Panc1 (cell line): ENCODE measurements at regions of chr10 and their contacts with region 1.

Region 1: GRCh38 chr10:93458821-93459257 is 23.3 kb downstream of the MYOF start:
- DNase-seq: peak; percentile 98
- ATAC-seq: peak; percentile 89
- H3K4me3 ChIP-seq: peak overlapping the region in 1 of 2 experiments; percentile 2; a peak in 1 of 4 replicates
- H3K27ac ChIP-seq: peak overlapping the region; percentile 100
- H3K4me1 ChIP-seq: peaks cover 76% of the 10 kb centered on the region
- H3K27me3 ChIP-seq: no peaks in the 10 kb centered on the region
- CTCF ChIP-seq: no peak

Region 2: DNA sequence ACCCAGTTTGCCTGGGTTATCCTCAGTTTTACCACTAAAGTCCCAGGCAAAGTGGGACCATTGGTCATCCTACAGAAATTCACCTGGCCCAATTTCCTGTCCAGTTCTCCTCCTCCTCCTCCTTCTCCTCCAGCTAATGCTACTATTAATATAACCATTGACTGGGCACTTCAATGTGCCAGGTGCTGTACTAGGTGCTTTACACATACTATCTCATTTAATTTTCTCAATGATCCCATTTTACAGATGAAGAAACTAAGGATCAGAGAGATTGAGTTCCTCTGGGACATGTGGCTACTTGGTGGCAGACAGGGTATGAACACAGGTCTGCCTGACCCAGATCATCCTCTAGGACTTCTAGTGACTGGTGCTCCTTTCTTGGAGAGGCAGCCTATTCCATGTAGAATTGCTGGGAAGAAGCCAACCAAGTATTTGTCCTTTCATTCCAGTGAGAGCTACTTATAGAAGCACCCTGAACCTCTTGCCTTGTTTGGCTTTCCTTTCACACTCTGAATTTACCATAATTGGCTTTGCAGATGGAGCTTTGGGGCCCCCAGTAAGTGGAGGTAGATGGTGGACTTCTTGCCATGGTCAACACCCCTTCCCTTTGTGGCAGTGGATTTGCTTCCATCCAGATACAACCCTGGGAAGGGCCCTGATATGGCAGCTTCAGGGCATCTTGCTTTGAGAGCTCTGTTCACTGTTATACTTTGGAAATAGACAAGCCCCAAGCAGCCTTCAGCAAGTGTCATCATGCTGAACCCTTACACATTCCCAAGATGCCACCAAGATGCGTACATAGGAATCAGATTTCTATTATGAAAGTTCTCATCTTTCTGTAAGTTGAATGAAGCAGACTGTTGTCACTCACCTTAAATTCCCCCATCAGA is 55.4 kb before region 1 on chr10:
- CTCF ChIA-PET with region 1: no interaction called
- POLR2A ChIA-PET with region 1: interaction called, 10 read pairs
- in situ Hi-C with region 1: no loop called
- intact Hi-C with region 1: no loop called
- DNase-seq: no peak
- ATAC-seq: no peak
- H3K4me3 ChIP-seq: no peak overlapping the region
- H3K27ac ChIP-seq: peak overlapping the region; percentile 29
- H3K4me1 ChIP-seq: 0 out of 2 replicates have a peak, but pooled peaks cover 3% of the 10 kb centered on the region
- H3K27me3 ChIP-seq: no peaks in the 10 kb centered on the region
- CTCF ChIP-seq: no peak

Region 3: GRCh38 chr10:94172332-94172731 is 713.5 kb after region 1 on chr10:
- CTCF ChIA-PET with region 1: no interaction called
- POLR2A ChIA-PET with region 1: no interaction called
- in situ Hi-C with region 1: no loop called
- intact Hi-C with region 1: no loop called
- DNase-seq: no peak
- ATAC-seq: no peak
- H3K4me3 ChIP-seq: no peak overlapping the region
- H3K27ac ChIP-seq: no peak overlapping the region
- H3K4me1 ChIP-seq: no peaks in the 10 kb centered on the region
- H3K27me3 ChIP-seq: no peaks in the 10 kb centered on the region
- CTCF ChIP-seq: no peak